ENCODE measurements at regions of chr3 and their contacts with region 1.

Region 1: DNA sequence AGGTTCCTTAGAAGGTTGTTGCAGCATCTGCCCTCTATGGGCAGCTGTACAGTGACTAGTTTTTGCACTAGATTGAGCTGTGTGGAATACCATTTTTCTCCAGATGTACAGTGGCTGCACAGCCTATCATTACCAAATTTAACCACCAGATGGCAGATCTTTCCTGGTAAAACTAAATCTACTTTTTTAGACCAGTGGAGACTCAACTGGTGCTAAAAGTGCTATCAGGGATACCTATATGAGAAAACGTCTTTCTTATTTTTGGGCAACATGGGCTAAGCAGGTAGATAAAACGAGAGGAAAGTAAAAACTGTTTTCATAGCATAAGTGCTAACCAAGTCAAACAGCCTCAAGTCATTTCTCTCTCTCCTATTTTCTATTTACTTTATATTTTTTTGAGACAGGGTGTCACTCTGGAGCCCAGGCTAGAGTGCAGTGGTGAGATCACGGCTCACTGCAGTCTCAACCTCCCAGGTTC is 21.2 kb downstream of the IGSF10 start:
- DNase-seq: no peak
- H3K4me3 ChIP-seq: no peak overlapping the region
- H3K27ac ChIP-seq: no peak overlapping the region
- H3K4me1 ChIP-seq: peaks cover 0 to 6% (median 0%) of the 10 kb centered on the region in 3 donors
- H3K27me3 ChIP-seq: no peaks in the 10 kb centered on the region
- CTCF ChIP-seq: peak; percentile 40 to 90 (median 80)
- POLR2A ChIP-seq: no peak

Region 2: GRCh38 chr3:151838583-151839312 is 399.1 kb after region 1 on chr3:
- intact Hi-C with region 1: loop called (anchors 5 kb)
- DNase-seq: no peak
- H3K4me3 ChIP-seq: peak overlapping the region in 3 of 4 donors; percentile 11 to 49 (median 30)
- H3K27ac ChIP-seq: no peak overlapping the region
- H3K4me1 ChIP-seq: peaks cover 0 to 35% (median 11%) of the 10 kb centered on the region in 3 donors
- H3K27me3 ChIP-seq: no peaks in the 10 kb centered on the region
- CTCF ChIP-seq: peak; percentile 13 to 91 (median 84)
- POLR2A ChIP-seq: no peak

Region 3: DNA sequence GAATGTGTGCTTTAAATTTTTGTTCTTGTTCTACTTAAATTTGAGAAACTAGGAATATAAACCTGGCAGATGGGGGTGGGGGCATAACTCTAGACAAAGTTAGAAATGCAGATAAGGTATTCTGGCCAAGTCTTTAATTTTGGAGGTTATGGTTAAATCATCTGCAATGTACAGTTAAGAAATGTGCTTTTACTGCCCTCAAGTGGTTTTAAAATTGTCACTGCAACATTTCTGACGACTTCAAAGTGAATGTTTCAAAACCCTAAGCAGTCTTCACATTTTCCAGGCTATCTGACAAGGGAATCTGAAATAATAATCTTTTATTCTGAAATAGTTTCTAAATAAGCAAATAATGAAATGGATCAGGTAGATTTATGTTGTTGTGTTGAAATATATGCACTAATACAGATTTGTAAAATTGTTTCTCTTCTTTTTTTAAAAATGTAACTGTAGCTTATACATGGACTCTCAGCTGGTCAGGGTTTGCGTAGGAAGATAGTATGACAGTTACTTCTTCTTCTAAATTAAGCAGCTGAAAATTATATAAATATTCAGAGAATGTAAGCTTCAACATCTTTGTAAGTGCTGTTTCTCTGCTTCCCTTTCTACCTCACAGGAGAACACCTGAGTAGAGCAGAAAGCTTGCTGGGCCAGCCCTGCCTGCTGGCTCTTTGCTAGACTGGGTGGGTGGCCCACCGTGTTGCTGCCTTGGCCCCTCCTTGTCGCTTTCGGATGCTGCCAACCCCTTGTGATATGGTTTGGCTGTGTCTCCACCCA is 478.8 kb after region 1 on chr3:
- intact Hi-C with region 1: loop called (anchors 10 kb)
- DNase-seq: no peak
- H3K4me3 ChIP-seq: no peak overlapping the region
- H3K27ac ChIP-seq: peak overlapping the region; percentile 60 to 84 (median 74)
- H3K4me1 ChIP-seq: peaks cover 0 to 30% (median 6%) of the 10 kb centered on the region in 3 donors
- H3K27me3 ChIP-seq: no peaks in the 10 kb centered on the region
- CTCF ChIP-seq: peak in 5 of 6 experiments; percentile 42 to 73 (median 57)
- POLR2A ChIP-seq: no peak

Measured in esophagus squamous epithelium (tissue), 5 donors.